Ovary (tissue), 10 donors: ENCODE measurements at regions of chr14 and their contacts with region 1.

Region 1: GRCh38 chr14:59018978-59019377 is 169.5 kb upstream of the DAAM1 start:
- DNase-seq: no peak
- H3K4me3 ChIP-seq: no peak overlapping the region
- H3K27ac ChIP-seq: no peak overlapping the region
- H3K4me1 ChIP-seq: no peaks in the 10 kb centered on the region
- H3K27me3 ChIP-seq: no peaks in the 10 kb centered on the region
- CTCF ChIP-seq: no peak
- EP300 ChIP-seq: no peak
- POLR2A ChIP-seq: no peak

Region 2: DNA sequence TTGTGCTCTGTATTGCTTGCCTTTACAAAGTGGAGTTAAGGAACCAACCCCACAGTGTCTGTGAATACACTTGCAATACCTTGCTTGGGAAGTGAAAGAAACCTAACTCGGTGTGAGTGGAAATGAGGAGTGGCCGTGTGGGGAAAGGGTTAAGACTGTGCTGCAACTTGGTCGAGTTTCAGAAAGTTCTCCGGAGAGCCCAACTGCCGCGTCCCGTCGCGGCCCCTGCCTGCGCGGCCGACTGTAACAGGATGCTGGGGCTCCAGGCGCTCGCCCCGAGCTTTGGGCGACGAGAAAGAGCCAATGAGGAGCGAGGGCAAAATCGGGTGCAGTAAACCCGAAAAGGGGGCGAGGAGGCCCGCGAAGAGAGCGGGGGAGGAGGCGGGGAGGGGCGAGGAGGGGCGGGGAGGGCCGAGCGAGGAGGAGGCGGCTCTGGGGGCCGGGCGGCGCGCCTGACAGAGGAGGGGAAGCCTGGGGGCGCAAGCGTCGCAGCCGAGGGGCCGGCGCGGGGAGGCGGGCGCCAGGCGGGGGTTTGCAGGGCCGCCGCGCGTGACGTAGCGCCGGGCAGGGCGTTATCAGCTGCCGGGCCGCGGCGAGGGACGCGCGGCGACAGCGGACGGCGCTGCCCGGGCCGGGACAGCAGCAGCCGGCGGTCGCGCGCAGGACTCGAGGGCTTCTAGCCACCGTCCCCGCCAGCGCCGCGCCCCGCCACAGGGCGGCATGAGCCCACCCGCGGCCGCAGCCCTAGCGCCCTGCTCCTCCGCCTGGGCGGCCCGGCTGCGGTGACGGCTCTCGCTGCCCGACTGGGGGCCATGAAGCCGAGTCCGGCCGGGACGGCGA is 381.4 kb before region 1 on chr14 and contains the start of gene DACT1:
- intact Hi-C with region 1: loop called in 2 of 4 experiments (anchors 10 kb)
- DNase-seq: peak; percentile 81 to 85 (median 82)
- H3K4me3 ChIP-seq: peak within 1 kb of the TSS; percentile 55
- H3K27ac ChIP-seq: peak within 1 kb of the TSS; percentile 96 to 97
- H3K4me1 ChIP-seq: no peaks in the 10 kb centered on the region
- H3K27me3 ChIP-seq: no peaks in the 10 kb centered on the region
- CTCF ChIP-seq: peak in 2 of 3 donors; percentile 12 to 37
- EP300 ChIP-seq: no peak
- POLR2A ChIP-seq: peak; percentile 55
- total RNA-seq, gene DACT1: 15.5 to 39.3 (median 22.7) TPM